ENCODE measurements at regions of chr20 and their contacts with region 1.

Region 1: DNA sequence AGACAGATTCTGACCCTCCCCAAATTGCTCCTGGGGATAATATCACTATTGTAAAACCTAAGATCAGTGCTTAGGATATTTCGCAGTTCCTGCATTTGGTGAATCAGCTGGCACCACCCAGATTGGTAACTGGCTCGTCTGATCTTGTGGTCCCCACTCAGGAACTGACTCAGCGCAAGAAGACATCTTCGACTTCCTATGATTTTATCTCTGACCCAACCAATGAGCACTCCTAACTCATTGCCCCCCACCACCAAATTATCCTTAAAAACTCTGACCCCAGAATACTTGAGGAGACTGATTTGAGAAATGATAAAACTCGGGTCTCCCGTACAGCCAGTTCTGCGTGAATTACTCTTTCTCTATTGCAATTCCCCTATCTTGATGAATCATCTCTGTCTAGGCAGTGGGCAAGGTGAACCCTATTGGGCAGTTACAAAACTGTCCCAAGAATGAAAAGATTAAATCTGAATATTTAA is 55.7 kb upstream of the PRND start:
- DNase-seq: peak; percentile 95
- H3K4me3 ChIP-seq: peak overlapping the region; percentile 1 to 16 (median 12)
- H3K27ac ChIP-seq: peak overlapping the region; percentile 98
- H3K4me1 ChIP-seq: peaks cover 32% of the 10 kb centered on the region
- H3K27me3 ChIP-seq: no peaks in the 10 kb centered on the region
- CTCF ChIP-seq: no peak

Region 2: DNA sequence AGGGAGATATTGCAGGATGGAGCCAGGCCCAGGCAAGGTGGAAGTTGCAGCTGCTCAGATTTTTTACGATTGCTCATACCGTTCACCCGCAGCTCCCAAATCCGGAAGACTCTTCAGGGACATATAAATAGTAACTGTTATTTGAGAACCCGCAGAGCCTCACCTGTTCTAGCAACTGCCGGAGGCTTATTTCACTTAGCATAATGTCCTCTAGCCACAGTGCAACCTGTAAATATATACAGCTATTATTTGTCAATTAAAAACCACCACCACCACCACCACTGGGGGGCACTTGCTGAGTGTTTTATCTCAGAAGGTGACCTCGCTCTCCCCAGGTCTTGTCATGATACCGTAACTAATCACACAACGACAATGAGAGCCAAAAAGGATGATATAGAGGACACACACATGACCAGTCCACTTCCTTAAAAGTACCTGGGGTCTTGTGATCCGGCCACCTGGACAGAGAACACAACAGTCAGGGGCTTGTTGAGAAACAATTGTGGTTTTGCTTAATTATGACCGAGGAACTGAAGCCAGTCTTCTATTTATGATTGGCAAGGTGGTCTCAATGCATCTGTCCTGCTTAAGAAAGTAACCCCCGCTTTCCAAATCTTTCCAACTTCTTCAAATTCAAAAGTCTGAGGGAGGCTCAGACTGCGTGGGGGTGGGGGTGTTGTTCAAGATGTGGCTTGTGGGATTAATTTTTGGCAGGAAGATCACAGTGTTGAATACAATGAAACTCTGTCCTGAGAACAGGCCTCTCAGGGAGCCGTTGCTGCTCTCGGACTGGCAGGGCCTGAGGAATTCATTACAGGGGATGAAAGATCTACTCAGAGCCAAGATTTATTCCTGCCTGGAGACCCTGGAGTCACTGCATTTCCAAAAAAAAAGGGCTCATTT is 52.1 kb before region 1 on chr20:
- CTCF ChIA-PET with region 1: interaction called, 4 read pairs
- dilution Hi-C with region 1: no loop called
- in situ Hi-C with region 1: no loop called
- intact Hi-C with region 1: loop called (anchors 1 kb)
- DNase-seq: peak; percentile 85
- H3K4me3 ChIP-seq: no peak overlapping the region
- H3K27ac ChIP-seq: peak overlapping the region; percentile 81
- H3K4me1 ChIP-seq: peaks cover 19% of the 10 kb centered on the region
- H3K27me3 ChIP-seq: no peaks in the 10 kb centered on the region
- CTCF ChIP-seq: peak; percentile 56 to 72

Region 3: DNA sequence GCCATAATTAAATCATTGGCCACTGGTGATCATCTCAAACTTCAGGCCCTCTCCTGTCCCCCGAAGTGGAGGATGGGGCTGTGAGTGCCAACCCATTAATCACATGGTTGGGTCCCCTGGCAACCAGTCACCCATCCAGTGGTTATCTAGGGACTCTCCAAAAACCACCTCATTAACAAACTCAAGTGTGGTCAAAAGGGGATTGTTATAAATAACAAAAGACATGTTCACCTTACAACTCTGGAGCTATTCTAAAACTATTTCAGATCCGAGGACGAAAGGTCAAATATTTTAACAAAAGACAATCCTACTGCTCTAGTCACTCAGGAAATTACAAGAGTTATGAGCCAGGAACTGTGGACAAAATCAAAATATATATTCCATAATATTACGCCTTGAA is 39.8 kb before region 1 on chr20:
- CTCF ChIA-PET with region 1: no interaction called
- dilution Hi-C with region 1: loop called (anchors 5 kb)
- in situ Hi-C with region 1: no loop called
- intact Hi-C with region 1: no loop called
- DNase-seq: no peak
- H3K4me3 ChIP-seq: no peak overlapping the region
- H3K27ac ChIP-seq: no peak overlapping the region
- H3K4me1 ChIP-seq: no peaks in the 10 kb centered on the region
- H3K27me3 ChIP-seq: no peaks in the 10 kb centered on the region
- CTCF ChIP-seq: no peak

Region 4: DNA sequence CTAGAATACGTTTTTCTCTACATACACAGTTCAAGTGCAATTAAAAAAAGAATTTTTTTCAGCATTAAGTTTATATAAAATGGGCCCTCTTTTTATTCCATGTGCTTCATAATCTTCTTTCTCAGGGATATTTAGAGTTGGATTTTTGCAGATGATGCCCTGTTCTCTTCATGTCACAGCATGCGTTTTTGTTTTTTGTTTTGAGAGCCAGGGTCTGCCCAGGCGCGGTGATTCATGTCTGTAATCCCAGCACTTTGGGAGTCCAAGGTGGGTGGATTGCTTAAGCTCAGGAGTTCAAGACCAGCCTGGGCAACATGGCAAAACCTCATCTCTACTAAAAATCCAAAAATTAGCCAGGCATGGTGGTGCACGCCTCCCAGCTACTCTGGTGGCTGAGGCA is 27.2 kb before region 1 on chr20:
- CTCF ChIA-PET with region 1: no interaction called
- dilution Hi-C with region 1: no loop called
- in situ Hi-C with region 1: no loop called
- intact Hi-C with region 1: loop called (anchors 2 kb)
- DNase-seq: peak; percentile 69
- H3K4me3 ChIP-seq: no peak overlapping the region
- H3K27ac ChIP-seq: no peak overlapping the region
- H3K4me1 ChIP-seq: peaks cover 23% of the 10 kb centered on the region
- H3K27me3 ChIP-seq: no peaks in the 10 kb centered on the region
- CTCF ChIP-seq: no peak

Region 5: DNA sequence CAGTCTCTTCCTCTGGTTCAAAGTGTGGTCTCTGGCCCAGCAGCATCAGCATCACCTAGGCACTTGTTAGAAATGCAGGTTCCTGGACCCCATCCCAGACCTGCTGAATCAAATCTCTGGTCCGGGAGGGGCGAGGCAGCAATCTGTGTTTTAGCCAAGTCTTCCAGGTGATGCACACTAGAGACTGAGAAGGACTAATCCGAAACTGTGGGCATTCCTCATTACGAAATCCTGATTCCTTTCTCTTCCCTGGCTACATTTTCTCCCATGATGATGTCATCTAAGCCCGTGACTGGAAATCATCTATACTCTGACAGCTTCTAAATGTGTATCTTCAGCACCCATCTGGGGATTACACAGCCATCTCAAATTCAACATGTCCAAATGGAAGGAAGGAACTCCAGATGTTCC is 16.0 kb after region 1 on chr20:
- CTCF ChIA-PET with region 1: no interaction called
- dilution Hi-C with region 1: no loop called
- in situ Hi-C with region 1: no loop called
- intact Hi-C with region 1: loop called (anchors 1 kb)
- DNase-seq: peak; percentile 99
- H3K4me3 ChIP-seq: no peak overlapping the region
- H3K27ac ChIP-seq: peak overlapping the region; percentile 72
- H3K4me1 ChIP-seq: peaks cover 29% of the 10 kb centered on the region
- H3K27me3 ChIP-seq: no peaks in the 10 kb centered on the region
- CTCF ChIP-seq: no peak

Region 6: GRCh38 chr20:4713401-4713800 is 47.4 kb after region 1 on chr20:
- CTCF ChIA-PET with region 1: no interaction called
- dilution Hi-C with region 1: no loop called
- in situ Hi-C with region 1: no loop called
- intact Hi-C with region 1: loop called (anchors 1 kb)
- DNase-seq: peak; percentile 98
- H3K4me3 ChIP-seq: no peak overlapping the region
- H3K27ac ChIP-seq: peak overlapping the region; percentile 29
- H3K4me1 ChIP-seq: peaks cover 26% of the 10 kb centered on the region
- H3K27me3 ChIP-seq: no peaks in the 10 kb centered on the region
- CTCF ChIP-seq: no peak

Measured in mammary epithelial cell (primary cell).